ENCODE measurements at regions of chr11 and their contacts with region 1.

Region 1: GRCh38 chr11:130131961-130132850 is 27.4 kb upstream of the ST14 start:
- DNase-seq: peak; percentile 66
- ATAC-seq: peak; percentile 96
- H3K4me3 ChIP-seq: no peak overlapping the region
- H3K27ac ChIP-seq: no peak overlapping the region
- H3K4me1 ChIP-seq: no peaks in the 10 kb centered on the region
- H3K27me3 ChIP-seq: no peaks in the 10 kb centered on the region
- CTCF ChIP-seq: peak; percentile 90
- POLR2A ChIP-seq: 0 out of 2 replicates have a peak, but pooled peaks have one; percentile 25
- RAD21 ChIP-seq: peak; percentile 94

Region 2: DNA sequence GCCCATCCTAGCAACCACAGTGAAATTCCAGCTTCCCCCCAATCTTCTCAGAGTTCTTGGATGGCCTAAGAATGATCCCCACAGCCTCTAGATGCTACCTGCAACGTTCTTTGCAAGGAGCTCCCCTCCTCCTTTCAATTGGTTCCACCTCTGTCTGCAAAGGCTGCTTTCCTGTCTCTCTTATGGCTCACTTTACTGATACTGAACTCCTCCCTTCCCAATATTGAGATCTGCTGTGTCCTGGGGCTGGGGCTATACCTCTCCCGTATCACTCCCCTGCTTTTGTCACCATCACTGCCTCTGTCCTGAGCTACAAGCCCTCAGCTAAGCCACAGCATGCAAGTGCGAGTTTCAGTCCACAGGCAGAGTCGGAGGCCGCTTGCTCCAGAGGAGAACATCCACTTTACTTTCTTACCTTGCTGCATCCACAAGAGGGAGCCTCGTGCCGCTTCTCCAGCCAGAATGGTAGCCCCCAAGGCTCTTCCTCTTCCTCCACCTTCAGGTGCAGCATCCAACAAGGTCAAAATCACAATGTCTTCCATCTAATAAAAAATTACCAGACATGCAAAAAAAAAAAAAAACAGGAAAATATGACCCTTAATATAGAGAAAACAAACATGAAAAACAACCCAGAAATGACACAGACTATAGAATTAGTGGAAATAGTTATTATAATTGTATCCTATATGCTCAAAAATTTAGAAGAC is 365.2 kb before region 1 on chr11:
- CTCF ChIA-PET with region 1: interaction called, 4 read pairs
- POLR2A ChIA-PET with region 1: no interaction called
- dilution Hi-C with region 1: no loop called
- in situ Hi-C with region 1: no loop called
- intact Hi-C with region 1: loop called (anchors 2 kb)
- DNase-seq: peak; percentile 23
- ATAC-seq: peak; percentile 93
- H3K4me3 ChIP-seq: no peak overlapping the region
- H3K27ac ChIP-seq: no peak overlapping the region
- H3K4me1 ChIP-seq: no peaks in the 10 kb centered on the region
- H3K27me3 ChIP-seq: no peaks in the 10 kb centered on the region
- CTCF ChIP-seq: peak; percentile 49
- POLR2A ChIP-seq: no peak
- RAD21 ChIP-seq: peak; percentile 41

Region 3: DNA sequence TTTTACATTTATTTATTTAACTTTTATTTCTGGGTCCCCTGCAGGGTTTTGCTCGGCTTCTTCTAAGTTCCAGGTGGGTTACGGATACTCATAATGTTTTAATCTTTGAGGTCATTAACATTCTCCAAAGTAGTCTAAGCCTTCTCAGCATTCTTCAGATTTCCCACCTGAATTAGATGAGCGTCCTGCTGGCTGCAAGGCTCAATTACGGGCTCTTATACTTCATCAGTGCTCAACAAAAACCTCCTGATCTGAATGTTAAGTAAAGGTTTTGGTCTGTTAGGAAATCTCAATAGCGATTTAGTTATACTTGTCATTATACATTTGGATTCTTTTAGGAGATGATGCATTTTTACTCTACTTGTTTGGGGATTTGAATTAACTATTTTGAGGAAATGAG is 209.5 kb before region 1 on chr11:
- CTCF ChIA-PET with region 1: interaction called, 13 read pairs
- POLR2A ChIA-PET with region 1: no interaction called
- dilution Hi-C with region 1: loop called (anchors 25 kb)
- in situ Hi-C with region 1: loop called (anchors 5 kb)
- intact Hi-C with region 1: loop called (anchors 1 kb)
- DNase-seq: no peak
- ATAC-seq: no peak
- H3K4me3 ChIP-seq: no peak overlapping the region
- H3K27ac ChIP-seq: no peak overlapping the region
- H3K4me1 ChIP-seq: no peaks in the 10 kb centered on the region
- H3K27me3 ChIP-seq: no peaks in the 10 kb centered on the region
- CTCF ChIP-seq: no peak
- POLR2A ChIP-seq: no peak
- RAD21 ChIP-seq: no peak

Region 4: GRCh38 chr11:129930296-129930695 is 201.9 kb before region 1 on chr11:
- CTCF ChIA-PET with region 1: interaction called, 13 read pairs
- POLR2A ChIA-PET with region 1: no interaction called
- dilution Hi-C with region 1: loop called (anchors 25 kb)
- in situ Hi-C with region 1: loop called (anchors 5 kb)
- intact Hi-C with region 1: no loop called
- DNase-seq: peak; percentile 33
- ATAC-seq: no peak
- H3K4me3 ChIP-seq: no peak overlapping the region
- H3K27ac ChIP-seq: no peak overlapping the region
- H3K4me1 ChIP-seq: no peaks in the 10 kb centered on the region
- H3K27me3 ChIP-seq: no peaks in the 10 kb centered on the region
- CTCF ChIP-seq: no peak
- POLR2A ChIP-seq: no peak
- RAD21 ChIP-seq: no peak